ENCODE measurements at regions of chr4 and their contacts with region 1.

Region 1: GRCh38 chr4:124334119-124334518 is 378.4 kb downstream of the ANKRD50 start:
- DNase-seq: no peak
- H3K4me3 ChIP-seq: no peak overlapping the region
- H3K27ac ChIP-seq: no peak overlapping the region
- H3K4me1 ChIP-seq: no peaks in the 10 kb centered on the region
- H3K27me3 ChIP-seq: no peaks in the 10 kb centered on the region
- CTCF ChIP-seq: peak; percentile 52 to 62

Region 2: DNA sequence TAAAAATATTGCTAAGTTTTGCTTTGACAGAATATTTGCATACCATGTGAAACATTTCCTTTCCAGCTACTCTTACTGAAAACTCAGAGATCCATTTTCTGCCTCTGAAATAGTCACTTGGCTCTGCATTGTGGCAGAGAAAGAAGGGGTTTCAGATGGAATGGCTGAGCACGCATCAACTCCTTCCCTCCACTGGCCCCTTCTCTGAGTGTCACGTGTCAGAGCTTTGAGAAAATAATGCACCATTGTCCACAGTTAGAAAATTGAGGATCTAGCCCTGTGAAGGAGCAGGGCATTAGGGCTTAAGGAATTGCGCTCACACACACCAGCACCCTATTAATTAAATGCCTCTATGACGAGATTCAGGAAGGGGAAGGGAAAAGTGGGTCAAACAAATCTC is 901.9 kb after region 1 on chr4:
- intact Hi-C with region 1: loop called (anchors 10 kb)
- DNase-seq: no peak
- H3K4me3 ChIP-seq: no peak overlapping the region
- H3K27ac ChIP-seq: no peak overlapping the region
- H3K4me1 ChIP-seq: no peaks in the 10 kb centered on the region
- H3K27me3 ChIP-seq: no peaks in the 10 kb centered on the region
- CTCF ChIP-seq: no peak

Region 3: GRCh38 chr4:125283707-125284279 is 949.7 kb after region 1 on chr4:
- intact Hi-C with region 1: loop called (anchors 10 kb)
- DNase-seq: no peak
- H3K4me3 ChIP-seq: no peak overlapping the region
- H3K27ac ChIP-seq: no peak overlapping the region
- H3K4me1 ChIP-seq: no peaks in the 10 kb centered on the region
- H3K27me3 ChIP-seq: no peaks in the 10 kb centered on the region
- CTCF ChIP-seq: peak; percentile 48 to 52

Measured in tibial artery (tissue), 4 donors.